ENCODE measurements at regions of chr6 and their contacts with region 1.

Region 1: DNA sequence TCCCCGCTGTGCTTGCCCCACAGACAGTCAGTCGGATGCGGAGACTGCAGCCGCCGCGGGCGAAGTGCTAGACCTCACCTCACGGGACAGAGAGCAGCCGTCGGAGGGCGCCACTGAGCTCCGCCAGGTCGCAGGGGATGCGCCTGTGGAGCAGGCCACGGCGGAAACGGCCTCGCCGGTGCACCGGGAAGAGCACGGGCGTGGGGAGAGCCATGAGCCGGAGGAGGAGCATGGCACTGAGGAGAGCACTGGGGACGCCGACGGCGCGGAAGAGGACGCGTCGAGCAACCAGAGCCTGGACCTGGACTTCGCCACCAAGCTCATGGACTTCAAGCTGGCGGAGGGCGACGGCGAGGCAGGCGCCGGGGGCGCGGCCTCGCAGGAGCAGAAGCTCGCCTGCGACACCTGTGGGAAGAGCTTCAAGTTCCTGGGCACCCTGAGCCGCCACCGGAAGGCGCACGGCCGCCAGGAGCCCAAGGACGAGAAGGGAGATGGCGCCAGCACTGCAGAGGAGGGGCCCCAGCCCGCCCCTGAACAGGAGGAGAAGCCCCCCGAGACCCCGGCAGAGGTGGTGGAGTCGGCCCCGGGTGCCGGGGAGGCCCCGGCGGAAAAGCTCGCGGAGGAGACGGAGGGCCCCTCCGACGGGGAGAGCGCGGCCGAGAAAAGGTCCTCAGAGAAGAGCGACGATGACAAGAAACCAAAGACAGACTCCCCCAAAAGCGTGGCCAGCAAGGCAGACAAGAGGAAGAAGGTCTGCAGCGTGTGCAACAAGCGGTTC is 66.4 kb downstream of the SSR1 start:
- DNase-seq: peak; percentile 74
- ATAC-seq: peak; percentile 58
- H3K4me3 Mint-ChIP-seq: no peak overlapping the region
- H3K27ac Mint-ChIP-seq: no peak overlapping the region
- H3K4me1 Mint-ChIP-seq: peaks cover 20% of the 10 kb centered on the region
- H3K27me3 Mint-ChIP-seq: no peaks in the 10 kb centered on the region
- CTCF ChIP-seq: peak; percentile 51; the same call in 1 of the 2 replicates

Region 2: GRCh38 chr6:7261032-7261841 is 14.6 kb after region 1 on chr6:
- CTCF ChIA-PET with region 1: interaction called, 21 read pairs
- POLR2A ChIA-PET with region 1: interaction called, 3 read pairs
- DNase-seq: peak; percentile 91
- ATAC-seq: peak; percentile 96
- H3K4me3 Mint-ChIP-seq: peak overlapping the region; percentile 86
- H3K27ac Mint-ChIP-seq: peak overlapping the region; percentile 95
- H3K4me1 Mint-ChIP-seq: peaks cover 27% of the 10 kb centered on the region
- H3K27me3 Mint-ChIP-seq: no peaks in the 10 kb centered on the region; the same call in 1 of the 2 replicates
- CTCF ChIP-seq: no peak

Region 3: DNA sequence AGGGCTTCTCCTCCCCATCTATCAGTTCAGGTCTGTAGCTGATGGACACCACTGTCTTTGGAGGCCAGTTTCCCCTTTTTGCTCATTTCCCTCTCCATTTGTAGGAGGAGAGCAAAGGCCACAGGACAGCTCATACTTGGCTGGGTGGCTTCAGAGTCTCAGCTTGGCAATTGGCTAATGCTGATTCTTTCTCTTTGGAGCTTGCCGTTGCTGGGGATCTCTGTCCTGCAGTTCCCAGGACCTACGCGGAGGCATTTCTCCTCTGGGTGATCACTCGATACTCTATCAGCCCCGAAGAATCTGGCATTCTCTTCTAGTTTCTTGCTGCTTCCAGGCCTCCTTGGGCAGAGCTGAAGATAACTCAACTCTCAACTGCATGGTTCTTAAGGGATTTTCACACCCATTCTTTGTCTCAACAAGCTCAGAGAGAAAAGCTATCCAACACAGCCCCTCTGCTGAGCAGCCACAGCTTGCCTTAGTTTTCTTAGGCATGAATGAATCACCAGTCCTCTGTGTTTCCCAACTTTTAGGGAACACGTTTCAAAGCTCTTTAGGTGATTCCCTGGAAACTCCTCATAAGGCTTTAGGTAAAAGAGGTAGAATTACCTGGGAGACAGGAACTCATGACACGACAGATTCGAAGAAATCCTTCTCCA is 85.6 kb after region 1 on chr6:
- CTCF ChIA-PET with region 1: no interaction called
- POLR2A ChIA-PET with region 1: no interaction called
- DNase-seq: no peak
- ATAC-seq: no peak
- H3K4me3 Mint-ChIP-seq: no peak overlapping the region
- H3K27ac Mint-ChIP-seq: no peak overlapping the region
- H3K4me1 Mint-ChIP-seq: no peaks in the 10 kb centered on the region
- H3K27me3 Mint-ChIP-seq: no peaks in the 10 kb centered on the region; the same call in 1 of the 2 replicates
- CTCF ChIP-seq: no peak

Measured in WTC11 (cell line).